ENCODE measurements at regions of chr17 and their contacts with region 1.

Region 1: DNA sequence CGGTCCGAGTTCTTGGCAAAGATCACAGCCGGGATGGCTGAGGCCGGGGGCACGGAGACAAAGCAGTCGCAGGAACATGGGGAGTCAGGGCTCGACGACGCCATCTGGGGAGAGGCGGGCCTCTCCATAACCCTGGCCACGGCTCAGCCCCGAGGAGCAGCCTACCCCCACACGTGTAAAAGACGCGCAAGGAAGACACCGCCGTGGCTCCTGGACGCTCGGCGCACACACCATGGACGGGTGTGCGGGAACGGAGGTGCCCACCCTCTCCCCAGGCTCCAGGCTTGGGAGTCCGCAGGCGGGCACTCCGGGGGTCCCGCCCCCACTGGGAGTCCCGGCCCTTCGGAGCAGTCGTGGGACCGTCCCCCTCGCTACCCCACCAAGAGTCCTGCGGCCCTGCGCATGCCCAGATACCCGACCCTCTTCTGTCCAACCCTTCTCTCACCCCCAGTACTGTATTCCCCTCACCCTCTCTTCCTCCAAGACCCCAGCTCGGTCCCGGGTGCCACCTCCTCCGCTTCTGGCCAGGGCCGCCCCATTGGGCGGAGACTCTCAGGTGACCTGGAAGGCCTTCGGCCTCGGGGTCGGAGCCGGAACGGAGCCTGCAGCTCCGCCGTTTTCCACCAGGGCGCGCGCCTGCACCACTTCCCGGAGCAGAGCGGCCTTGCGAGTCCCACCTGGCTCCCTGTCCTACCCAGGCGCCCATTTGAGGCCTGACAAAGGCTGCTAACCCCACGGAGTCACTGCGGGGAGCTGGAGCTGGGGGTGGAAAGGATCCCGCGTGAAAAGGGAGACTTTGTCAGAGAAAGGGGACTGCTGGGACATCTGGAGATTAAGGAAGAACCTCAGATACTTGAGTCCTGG is at the start of gene SCRN2:
- DNase-seq: peak; percentile 90
- ATAC-seq: peak; percentile 94
- H3K4me3 ChIP-seq: peak within 1 kb of the TSS; percentile 58 to 87 (median 79)
- H3K4me3 Mint-ChIP-seq: peak within 1 kb of the TSS; percentile 97
- H3K27ac ChIP-seq: peak within 1 kb of the TSS; percentile 26 to 75
- H3K27ac Mint-ChIP-seq: peak within 1 kb of the TSS; percentile 89
- H3K4me1 ChIP-seq: peaks cover 10 to 18% of the 10 kb centered on the region in 2 donors
- H3K4me1 Mint-ChIP-seq: peaks cover 26% of the 10 kb centered on the region
- H3K27me3 ChIP-seq: peaks cover 0 to 23% (median 12%) of the 10 kb centered on the region in 4 experiments
- H3K27me3 Mint-ChIP-seq: peaks cover 20% of the 10 kb centered on the region
- CTCF ChIP-seq: peak; percentile 94
- total RNA-seq, gene SCRN2: 47.8 and 53.8 TPM in 2 replicates

Region 2: DNA sequence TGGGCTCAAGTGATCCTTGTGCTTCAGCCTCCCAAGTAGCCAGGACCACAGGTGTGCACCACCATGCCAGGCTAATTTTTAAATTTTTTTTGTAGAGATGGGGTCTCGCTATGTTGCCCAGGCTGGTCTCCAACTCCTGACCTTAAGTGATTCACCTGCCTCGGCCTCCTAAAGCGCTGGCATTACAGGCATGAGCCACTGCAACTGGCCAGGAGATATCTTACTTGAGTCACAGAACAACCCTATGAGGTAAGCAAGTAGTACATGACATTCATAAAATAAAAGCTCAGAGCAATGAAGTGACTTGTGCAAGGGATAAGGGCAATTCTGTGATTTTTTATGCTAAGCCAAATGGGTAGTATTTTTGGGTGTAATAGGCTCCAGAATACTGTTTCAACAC is 709.2 kb before region 1 on chr17:
- CTCF ChIA-PET with region 1: no interaction called
- POLR2A ChIA-PET with region 1: no interaction called
- intact Hi-C with region 1: no loop called
- DNase-seq: no peak
- ATAC-seq: no peak
- H3K4me3 ChIP-seq: no peak overlapping the region
- H3K4me3 Mint-ChIP-seq: no peak overlapping the region
- H3K27ac ChIP-seq: no peak overlapping the region
- H3K27ac Mint-ChIP-seq: no peak overlapping the region
- H3K4me1 ChIP-seq: no peaks in the 10 kb centered on the region
- H3K4me1 Mint-ChIP-seq: peaks cover 3% of the 10 kb centered on the region
- H3K27me3 ChIP-seq: no peaks in the 10 kb centered on the region
- H3K27me3 Mint-ChIP-seq: no peaks in the 10 kb centered on the region
- CTCF ChIP-seq: no peak

Region 3: GRCh38 chr17:47742319-47743181 is 98.4 kb before region 1 on chr17:
- CTCF ChIA-PET with region 1: no interaction called
- POLR2A ChIA-PET with region 1: no interaction called
- intact Hi-C with region 1: no loop called
- DNase-seq: peak; percentile 70
- ATAC-seq: peak; percentile 86
- H3K4me3 ChIP-seq: no peak overlapping the region
- H3K4me3 Mint-ChIP-seq: no peak overlapping the region
- H3K27ac ChIP-seq: no peak overlapping the region
- H3K27ac Mint-ChIP-seq: no peak overlapping the region
- H3K4me1 ChIP-seq: peaks cover 7 to 19% of the 10 kb centered on the region in 2 donors
- H3K4me1 Mint-ChIP-seq: peaks cover 22% of the 10 kb centered on the region
- H3K27me3 ChIP-seq: peaks cover 0 to 4% (median 0%) of the 10 kb centered on the region in 4 experiments
- H3K27me3 Mint-ChIP-seq: peaks cover 8% of the 10 kb centered on the region
- CTCF ChIP-seq: peak; percentile 67

Region 4: GRCh38 chr17:47810205-47810821 is 30.7 kb before region 1 on chr17:
- CTCF ChIA-PET with region 1: no interaction called
- POLR2A ChIA-PET with region 1: no interaction called
- intact Hi-C with region 1: no loop called
- DNase-seq: no peak
- ATAC-seq: no peak
- H3K4me3 ChIP-seq: no peak overlapping the region
- H3K4me3 Mint-ChIP-seq: no peak overlapping the region
- H3K27ac ChIP-seq: no peak overlapping the region
- H3K27ac Mint-ChIP-seq: peak overlapping the region; percentile 20
- H3K4me1 ChIP-seq: no peaks in the 10 kb centered on the region
- H3K4me1 Mint-ChIP-seq: no peaks in the 10 kb centered on the region
- H3K27me3 ChIP-seq: no peaks in the 10 kb centered on the region
- H3K27me3 Mint-ChIP-seq: no peaks in the 10 kb centered on the region
- CTCF ChIP-seq: no peak

Region 5: GRCh38 chr17:47855737-47856136 is 14.8 kb after region 1 on chr17:
- CTCF ChIA-PET with region 1: interaction called, 12 read pairs
- POLR2A ChIA-PET with region 1: no interaction called
- intact Hi-C with region 1: no loop called
- DNase-seq: no peak
- ATAC-seq: no peak
- H3K4me3 ChIP-seq: no peak overlapping the region
- H3K4me3 Mint-ChIP-seq: no peak overlapping the region
- H3K27ac ChIP-seq: no peak overlapping the region
- H3K27ac Mint-ChIP-seq: no peak overlapping the region
- H3K4me1 ChIP-seq: peaks cover 17 to 19% of the 10 kb centered on the region in 2 donors
- H3K4me1 Mint-ChIP-seq: peaks cover 13% of the 10 kb centered on the region
- H3K27me3 ChIP-seq: peaks cover 0 to 69% (median 30%) of the 10 kb centered on the region in 4 experiments
- H3K27me3 Mint-ChIP-seq: peaks cover 78% of the 10 kb centered on the region
- CTCF ChIP-seq: no peak

Region 6: GRCh38 chr17:47941236-47941994 is 100.4 kb after region 1 on chr17 and contains the start of gene PNPO:
- CTCF ChIA-PET with region 1: interaction called, 6 read pairs
- POLR2A ChIA-PET with region 1: no interaction called
- intact Hi-C with region 1: loop called (anchors 2 kb)
- DNase-seq: peak; percentile 94
- ATAC-seq: peak; percentile 99
- H3K4me3 ChIP-seq: peak within 1 kb of the TSS; percentile 50 to 84 (median 76)
- H3K4me3 Mint-ChIP-seq: peak within 1 kb of the TSS; percentile 88
- H3K27ac ChIP-seq: peak within 1 kb of the TSS; percentile 63 to 83
- H3K27ac Mint-ChIP-seq: peak within 1 kb of the TSS; percentile 82
- H3K4me1 ChIP-seq: peaks cover 11 to 22% of the 10 kb centered on the region in 2 donors
- H3K4me1 Mint-ChIP-seq: peaks cover 31% of the 10 kb centered on the region
- H3K27me3 ChIP-seq: no peaks in the 10 kb centered on the region
- H3K27me3 Mint-ChIP-seq: no peaks in the 10 kb centered on the region
- CTCF ChIP-seq: no peak
- total RNA-seq, gene PNPO: 12.4 and 14.7 TPM in 2 replicates

Region 7: GRCh38 chr17:48330386-48330785 is 489.4 kb after region 1 on chr17:
- CTCF ChIA-PET with region 1: no interaction called
- POLR2A ChIA-PET with region 1: no interaction called
- intact Hi-C with region 1: no loop called
- DNase-seq: no peak
- ATAC-seq: no peak
- H3K4me3 ChIP-seq: no peak overlapping the region
- H3K4me3 Mint-ChIP-seq: no peak overlapping the region
- H3K27ac ChIP-seq: no peak overlapping the region
- H3K27ac Mint-ChIP-seq: no peak overlapping the region
- H3K4me1 ChIP-seq: no peaks in the 10 kb centered on the region
- H3K4me1 Mint-ChIP-seq: no peaks in the 10 kb centered on the region
- H3K27me3 ChIP-seq: no peaks in the 10 kb centered on the region
- H3K27me3 Mint-ChIP-seq: peaks cover 7% of the 10 kb centered on the region
- CTCF ChIP-seq: no peak